BJ (cell line): ENCODE measurements at regions of chr12 and their contacts with region 1.

Region 1: DNA sequence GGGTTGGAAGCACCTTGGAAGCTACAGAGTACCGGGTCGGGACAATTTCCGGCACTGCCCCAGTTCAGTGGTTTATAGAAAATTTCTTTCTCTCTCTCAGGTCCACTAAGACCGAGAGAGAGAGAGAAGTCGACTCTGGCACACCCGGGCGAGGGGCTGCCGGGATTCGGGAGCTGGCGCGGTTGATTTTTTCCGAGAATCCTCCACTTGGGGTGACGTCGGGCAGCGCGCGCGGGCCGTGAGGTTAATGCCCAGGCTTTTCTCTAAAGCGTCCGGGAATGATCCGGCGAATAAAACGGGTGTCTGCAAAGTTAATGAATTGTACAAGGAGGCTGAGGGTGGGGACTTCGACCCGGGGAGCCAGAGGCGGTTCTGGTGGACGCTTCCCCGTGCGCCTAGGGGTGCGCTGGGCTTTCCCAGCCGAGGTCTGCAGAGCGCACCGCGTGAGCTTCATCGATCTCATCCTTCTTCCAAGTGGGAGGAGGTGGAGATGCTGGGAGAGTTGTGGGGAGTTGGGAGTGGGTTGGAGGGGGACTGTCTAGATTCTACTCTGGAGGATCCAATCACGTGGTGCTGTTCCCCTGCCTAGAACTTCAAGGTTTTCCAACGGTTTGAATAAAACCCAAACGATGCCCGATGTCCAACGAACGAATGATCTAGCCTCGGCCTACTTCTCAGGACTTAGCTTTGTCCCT is 51.9 kb upstream of the TBX3 start:
- DNase-seq: no peak
- H3K4me3 ChIP-seq: no peak overlapping the region
- H3K27me3 ChIP-seq: no peaks in the 10 kb centered on the region
- CTCF ChIP-seq: no peak

Region 2: DNA sequence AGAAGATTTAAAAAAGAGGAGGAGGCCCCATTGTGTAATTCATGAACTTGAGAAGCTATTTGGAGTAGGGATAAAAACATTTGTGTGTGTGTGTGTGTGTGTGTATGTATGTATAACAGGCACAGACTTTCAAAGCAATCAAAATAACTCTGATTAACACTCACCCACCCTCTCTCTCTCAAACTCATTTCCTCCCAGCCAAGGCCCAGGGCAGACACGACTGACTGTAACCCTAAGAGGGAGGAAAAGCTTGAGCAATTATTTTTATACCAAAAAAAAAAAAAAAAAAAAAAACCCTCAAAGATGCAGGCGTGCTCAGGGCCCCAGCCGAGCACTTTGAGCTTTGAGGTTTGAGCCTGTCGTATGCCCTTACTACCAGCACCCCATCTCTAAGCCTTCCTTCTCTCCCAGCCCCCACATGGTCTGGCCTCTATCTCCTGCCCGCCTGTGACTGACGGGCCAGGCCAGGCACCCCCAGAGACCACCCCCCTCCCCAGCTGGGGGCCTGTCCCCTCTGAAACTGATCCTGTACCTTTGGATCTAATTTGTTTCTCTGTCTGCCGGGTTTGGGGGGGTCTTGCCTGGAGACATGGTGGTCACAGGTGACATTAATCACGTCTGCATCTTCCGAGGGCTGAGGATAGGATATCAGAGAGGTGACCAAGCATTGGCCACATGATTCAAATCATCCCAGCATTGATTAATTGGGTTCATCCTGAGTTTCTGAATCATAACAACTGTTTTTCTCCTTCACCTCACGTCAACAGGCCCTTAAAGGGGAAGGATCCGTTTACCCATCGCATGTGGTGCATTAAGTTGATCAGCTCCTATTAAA is 11.1 kb after region 1 on chr12:
- CTCF ChIA-PET with region 1: no interaction called
- POLR2A ChIA-PET with region 1: no interaction called
- DNase-seq: peak; percentile 63
- H3K4me3 ChIP-seq: no peak overlapping the region
- H3K27me3 ChIP-seq: no peaks in the 10 kb centered on the region
- CTCF ChIP-seq: no peak

Region 3: DNA sequence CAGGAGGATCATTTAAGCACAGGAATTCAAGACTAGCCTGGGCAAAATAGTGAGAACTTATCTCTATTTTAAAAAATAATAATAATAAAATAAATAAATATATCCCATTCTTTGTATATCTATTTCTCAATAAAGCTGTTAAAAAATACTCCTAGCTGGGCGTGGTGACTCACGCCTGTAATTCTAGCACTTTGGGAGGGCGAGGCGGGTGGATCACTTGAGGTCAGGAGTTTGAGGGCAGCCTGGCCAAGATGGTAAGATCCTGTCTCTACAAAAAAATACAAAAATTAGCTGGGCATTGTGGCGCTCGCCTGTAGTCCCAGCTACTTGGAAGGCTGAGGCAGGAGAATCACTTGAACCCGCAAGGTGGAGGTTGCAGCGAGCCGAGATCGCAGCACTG is 23.8 kb after region 1 on chr12:
- CTCF ChIA-PET with region 1: no interaction called
- POLR2A ChIA-PET with region 1: interaction called, 11 read pairs
- DNase-seq: no peak
- H3K4me3 ChIP-seq: no peak overlapping the region
- H3K27me3 ChIP-seq: no peaks in the 10 kb centered on the region
- CTCF ChIP-seq: no peak

Region 4: GRCh38 chr12:114774181-114774580 is 38.4 kb after region 1 on chr12:
- CTCF ChIA-PET with region 1: no interaction called
- POLR2A ChIA-PET with region 1: no interaction called
- DNase-seq: no peak
- H3K4me3 ChIP-seq: no peak overlapping the region
- H3K27me3 ChIP-seq: no peaks in the 10 kb centered on the region
- CTCF ChIP-seq: no peak